ENCODE measurements at regions of chr3 and their contacts with region 1.

Region 1: DNA sequence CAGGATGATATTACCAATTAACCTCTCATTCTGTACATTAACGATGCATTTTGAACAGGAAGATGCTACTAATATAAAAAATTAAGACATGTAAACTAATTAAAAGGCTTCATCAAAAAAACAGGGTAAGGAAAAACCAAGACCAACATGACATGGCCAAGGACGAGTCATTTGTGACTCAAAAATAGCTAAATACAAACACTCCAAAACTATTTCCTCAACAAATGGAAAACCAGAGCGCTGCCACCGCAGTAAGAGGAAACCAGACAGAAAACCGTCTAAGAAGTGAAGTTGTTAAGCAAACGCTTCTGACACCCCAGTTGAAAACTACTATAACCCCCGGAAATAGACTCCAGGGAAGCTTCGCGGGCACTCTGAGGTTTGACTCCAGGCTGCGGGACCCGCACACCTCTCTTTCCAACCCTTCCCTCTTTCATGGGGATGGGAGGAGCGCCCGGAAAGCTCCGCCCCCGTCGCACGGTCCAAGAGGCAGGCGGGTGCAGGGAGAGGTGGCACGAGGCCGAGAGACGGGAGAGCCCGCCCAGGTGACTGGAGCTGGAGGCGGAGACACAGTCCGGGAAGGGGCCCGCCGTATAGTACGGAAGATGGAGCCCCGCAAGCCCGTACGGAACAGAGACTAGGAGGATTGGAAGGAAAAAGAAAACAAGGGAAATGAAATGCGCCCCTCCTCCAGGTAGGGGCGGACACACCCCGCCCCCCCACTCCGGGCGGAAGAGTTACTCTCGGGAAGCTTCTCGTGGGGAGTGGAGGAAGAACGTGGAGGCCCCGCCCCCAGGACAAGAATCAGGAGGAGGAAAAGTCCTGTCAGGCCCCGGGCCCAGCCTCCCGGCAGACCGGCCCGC is 708 bp downstream of the DCAF1 start:
- DNase-seq: peak; percentile 77
- ATAC-seq: peak; percentile 40
- H3K4me3 Mint-ChIP-seq: peak overlapping the region; percentile 89
- H3K27ac Mint-ChIP-seq: peak overlapping the region; percentile 95
- H3K4me1 Mint-ChIP-seq: peaks cover 22% of the 10 kb centered on the region
- H3K27me3 Mint-ChIP-seq: no peaks in the 10 kb centered on the region
- CTCF ChIP-seq: no peak

Region 2: GRCh38 chr3:49939858-49940666 is 1559.0 kb before region 1 on chr3 and contains the start of gene RBM6:
- CTCF ChIA-PET with region 1: no interaction called
- POLR2A ChIA-PET with region 1: interaction called, 16 read pairs
- intact Hi-C with region 1: no loop called
- DNase-seq: peak; percentile 89
- ATAC-seq: peak; percentile 93
- H3K4me3 Mint-ChIP-seq: peak within 1 kb of the TSS; percentile 98
- H3K27ac Mint-ChIP-seq: peak within 1 kb of the TSS; percentile 97
- H3K4me1 Mint-ChIP-seq: peaks cover 43% of the 10 kb centered on the region
- H3K27me3 Mint-ChIP-seq: no peaks in the 10 kb centered on the region
- CTCF ChIP-seq: no peak
- total RNA-seq, gene RBM6: 160 and 172 TPM in 2 replicates

Region 3: GRCh38 chr3:50568947-50569749 is 930.0 kb before region 1 on chr3 and contains the start of gene HEMK1:
- CTCF ChIA-PET with region 1: no interaction called
- POLR2A ChIA-PET with region 1: interaction called, 17 read pairs
- intact Hi-C with region 1: no loop called
- DNase-seq: peak; percentile 90
- ATAC-seq: peak; percentile 74
- H3K4me3 Mint-ChIP-seq: peak within 1 kb of the TSS; percentile 97
- H3K27ac Mint-ChIP-seq: peak within 1 kb of the TSS; percentile 93
- H3K4me1 Mint-ChIP-seq: peaks cover 34% of the 10 kb centered on the region
- H3K27me3 Mint-ChIP-seq: no peaks in the 10 kb centered on the region
- CTCF ChIP-seq: no peak
- total RNA-seq, gene HEMK1: 23.5 and 26.9 TPM in 2 replicates

Region 4: DNA sequence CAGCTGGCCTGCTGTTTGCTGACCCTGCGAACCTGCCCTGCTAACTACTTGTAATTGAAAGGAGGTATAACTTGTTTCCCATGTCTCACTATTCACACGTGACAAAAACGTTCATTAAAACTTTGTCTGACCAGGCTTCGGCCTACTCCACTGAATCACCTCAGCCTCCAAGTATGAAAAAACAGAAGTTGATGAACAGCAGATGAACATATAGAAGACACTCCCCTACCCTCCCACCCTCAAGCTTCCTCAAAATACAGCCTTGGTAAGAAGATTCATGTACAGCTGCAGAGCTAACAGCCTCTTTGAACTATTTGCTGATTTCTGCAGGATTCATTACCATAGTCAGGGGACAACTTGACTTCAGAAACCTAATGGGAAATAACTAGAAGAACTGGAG is 97.4 kb before region 1 on chr3:
- CTCF ChIA-PET with region 1: no interaction called
- POLR2A ChIA-PET with region 1: interaction called, 11 read pairs
- intact Hi-C with region 1: no loop called
- DNase-seq: no peak
- ATAC-seq: no peak
- H3K4me3 Mint-ChIP-seq: no peak overlapping the region
- H3K27ac Mint-ChIP-seq: no peak overlapping the region
- H3K4me1 Mint-ChIP-seq: peaks cover 2% of the 10 kb centered on the region
- H3K27me3 Mint-ChIP-seq: no peaks in the 10 kb centered on the region
- CTCF ChIP-seq: no peak

Region 5: GRCh38 chr3:51568036-51568435 is 68.9 kb after region 1 on chr3:
- CTCF ChIA-PET with region 1: no interaction called
- POLR2A ChIA-PET with region 1: no interaction called
- intact Hi-C with region 1: loop called (anchors 10 kb)
- DNase-seq: no peak
- ATAC-seq: no peak
- H3K4me3 Mint-ChIP-seq: no peak overlapping the region
- H3K27ac Mint-ChIP-seq: no peak overlapping the region
- H3K4me1 Mint-ChIP-seq: peaks cover 20% of the 10 kb centered on the region
- H3K27me3 Mint-ChIP-seq: no peaks in the 10 kb centered on the region
- CTCF ChIP-seq: no peak

Region 6: GRCh38 chr3:51670823-51671733 is 172.0 kb after region 1 on chr3 and contains the start of gene TEX264:
- CTCF ChIA-PET with region 1: interaction called, 89 read pairs
- POLR2A ChIA-PET with region 1: interaction called, 94 read pairs
- intact Hi-C with region 1: loop called (anchors 1 kb)
- DNase-seq: peak; percentile 95
- ATAC-seq: peak; percentile 85
- H3K4me3 Mint-ChIP-seq: peak within 1 kb of the TSS; percentile 89
- H3K27ac Mint-ChIP-seq: peak within 1 kb of the TSS; percentile 89
- H3K4me1 Mint-ChIP-seq: peaks cover 55% of the 10 kb centered on the region
- H3K27me3 Mint-ChIP-seq: no peaks in the 10 kb centered on the region
- CTCF ChIP-seq: no peak
- total RNA-seq, gene TEX264: 24.1 and 24.4 TPM in 2 replicates

Region 7: DNA sequence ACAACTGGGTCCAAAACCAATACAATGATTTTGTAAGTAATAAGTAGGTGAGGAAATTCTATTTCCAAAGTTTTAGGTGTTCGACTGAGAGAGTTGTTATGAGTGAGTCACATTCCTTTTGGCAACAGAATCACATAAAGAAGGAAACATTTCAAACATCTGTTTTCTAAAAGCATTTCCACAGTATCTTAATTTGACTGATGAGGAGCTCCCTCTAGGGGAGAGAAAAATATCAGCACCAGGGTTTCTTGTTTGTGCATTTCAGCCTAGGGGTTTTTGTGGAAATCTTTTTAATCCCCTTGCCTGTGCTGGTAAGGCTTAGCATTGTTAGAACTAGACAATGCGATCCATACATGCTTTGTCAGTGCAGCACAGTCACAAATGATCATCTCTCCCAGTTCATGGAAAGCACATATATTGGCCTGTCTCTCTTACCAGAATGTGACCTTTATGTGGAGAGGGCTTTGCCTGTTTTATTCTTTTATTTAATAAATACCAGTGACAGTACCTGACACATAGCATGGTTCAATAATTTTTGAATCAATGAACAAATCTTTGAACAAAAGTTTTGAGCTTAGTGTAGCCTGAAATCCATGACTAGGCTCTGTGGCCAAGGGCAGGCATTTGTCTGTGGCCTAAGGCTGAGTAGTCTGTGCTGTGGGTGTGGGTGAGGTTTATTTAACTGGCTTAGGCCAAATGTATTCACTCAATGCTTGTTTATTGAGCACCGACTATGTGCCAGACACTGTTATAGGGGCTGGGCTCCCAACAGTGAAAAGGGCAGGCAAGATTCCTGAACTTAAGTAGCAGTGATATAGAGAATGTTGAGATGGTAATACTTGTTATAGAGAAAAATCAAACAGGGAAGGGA is 301.0 kb after region 1 on chr3:
- CTCF ChIA-PET with region 1: interaction called, 37 read pairs
- POLR2A ChIA-PET with region 1: no interaction called
- intact Hi-C with region 1: loop called (anchors 1 kb)
- DNase-seq: no peak
- ATAC-seq: no peak
- H3K4me3 Mint-ChIP-seq: no peak overlapping the region
- H3K27ac Mint-ChIP-seq: no peak overlapping the region
- H3K4me1 Mint-ChIP-seq: no peaks in the 10 kb centered on the region
- H3K27me3 Mint-ChIP-seq: peaks cover 24% of the 10 kb centered on the region
- CTCF ChIP-seq: no peak